ENCODE measurements at regions of chr17 and their contacts with region 1.

Region 1: GRCh38 chr17:83051395-83052233 is 27.8 kb upstream of the METRNL start:
- DNase-seq: peak; percentile 97
- ATAC-seq: peak; percentile 85
- H3K4me3 Mint-ChIP-seq: peak overlapping the region; percentile 79
- H3K27ac Mint-ChIP-seq: peak overlapping the region; percentile 78
- H3K4me1 Mint-ChIP-seq: peaks cover 31% of the 10 kb centered on the region
- H3K27me3 Mint-ChIP-seq: no peaks in the 10 kb centered on the region
- CTCF ChIP-seq: no peak

Region 2: GRCh38 chr17:82674656-82675475 is 376.7 kb before region 1 on chr17:
- CTCF ChIA-PET with region 1: no interaction called
- POLR2A ChIA-PET with region 1: no interaction called
- intact Hi-C with region 1: no loop called
- DNase-seq: no peak
- ATAC-seq: no peak
- H3K4me3 Mint-ChIP-seq: no peak overlapping the region
- H3K27ac Mint-ChIP-seq: no peak overlapping the region
- H3K4me1 Mint-ChIP-seq: no peaks in the 10 kb centered on the region
- H3K27me3 Mint-ChIP-seq: no peaks in the 10 kb centered on the region
- CTCF ChIP-seq: no peak

Region 3: GRCh38 chr17:82751571-82752370 is 299.8 kb before region 1 on chr17 and contains the start of gene TBCD:
- CTCF ChIA-PET with region 1: no interaction called
- POLR2A ChIA-PET with region 1: no interaction called
- intact Hi-C with region 1: loop called (anchors 2 kb)
- DNase-seq: peak; percentile 86
- ATAC-seq: peak; percentile 88
- H3K4me3 Mint-ChIP-seq: peak within 1 kb of the TSS; percentile 84
- H3K27ac Mint-ChIP-seq: no peak within 1 kb of the TSS
- H3K4me1 Mint-ChIP-seq: peaks cover 22% of the 10 kb centered on the region
- H3K27me3 Mint-ChIP-seq: no peaks in the 10 kb centered on the region
- CTCF ChIP-seq: no peak
- total RNA-seq, gene TBCD: 49.9 and 50.9 TPM in 2 replicates

Region 4: DNA sequence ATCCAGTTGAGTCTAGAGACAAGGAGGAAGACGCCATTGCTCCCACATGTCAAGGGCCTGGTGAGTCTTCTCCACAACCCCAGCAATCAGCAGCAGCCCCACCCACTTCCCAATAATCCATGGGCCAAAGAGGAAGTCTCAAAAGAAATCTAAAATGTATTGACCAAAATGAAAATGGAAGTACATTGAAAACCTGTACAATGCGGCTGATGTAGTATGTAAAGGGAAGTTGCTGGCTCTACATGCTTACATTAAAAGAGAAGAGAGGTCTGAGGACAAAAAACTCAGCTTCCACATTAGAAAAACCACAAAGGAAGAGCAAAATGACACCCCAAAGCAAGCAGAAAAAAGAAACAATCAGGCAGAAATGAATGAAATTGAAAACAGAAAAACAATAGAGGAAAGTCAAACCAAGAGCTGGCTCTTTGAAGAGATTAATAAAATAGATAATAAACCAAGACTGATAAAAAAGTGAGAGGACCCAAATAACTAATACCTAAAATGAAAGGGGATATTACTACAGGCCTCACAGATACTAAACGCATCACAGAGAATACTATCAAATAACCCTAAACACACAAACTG is 72.8 kb before region 1 on chr17:
- CTCF ChIA-PET with region 1: no interaction called
- POLR2A ChIA-PET with region 1: no interaction called
- intact Hi-C with region 1: loop called (anchors 5 kb)
- DNase-seq: no peak
- ATAC-seq: peak; percentile 56
- H3K4me3 Mint-ChIP-seq: peak overlapping the region; percentile 40
- H3K27ac Mint-ChIP-seq: peak overlapping the region; percentile 86
- H3K4me1 Mint-ChIP-seq: peaks cover 33% of the 10 kb centered on the region
- H3K27me3 Mint-ChIP-seq: no peaks in the 10 kb centered on the region
- CTCF ChIP-seq: no peak

Region 5: DNA sequence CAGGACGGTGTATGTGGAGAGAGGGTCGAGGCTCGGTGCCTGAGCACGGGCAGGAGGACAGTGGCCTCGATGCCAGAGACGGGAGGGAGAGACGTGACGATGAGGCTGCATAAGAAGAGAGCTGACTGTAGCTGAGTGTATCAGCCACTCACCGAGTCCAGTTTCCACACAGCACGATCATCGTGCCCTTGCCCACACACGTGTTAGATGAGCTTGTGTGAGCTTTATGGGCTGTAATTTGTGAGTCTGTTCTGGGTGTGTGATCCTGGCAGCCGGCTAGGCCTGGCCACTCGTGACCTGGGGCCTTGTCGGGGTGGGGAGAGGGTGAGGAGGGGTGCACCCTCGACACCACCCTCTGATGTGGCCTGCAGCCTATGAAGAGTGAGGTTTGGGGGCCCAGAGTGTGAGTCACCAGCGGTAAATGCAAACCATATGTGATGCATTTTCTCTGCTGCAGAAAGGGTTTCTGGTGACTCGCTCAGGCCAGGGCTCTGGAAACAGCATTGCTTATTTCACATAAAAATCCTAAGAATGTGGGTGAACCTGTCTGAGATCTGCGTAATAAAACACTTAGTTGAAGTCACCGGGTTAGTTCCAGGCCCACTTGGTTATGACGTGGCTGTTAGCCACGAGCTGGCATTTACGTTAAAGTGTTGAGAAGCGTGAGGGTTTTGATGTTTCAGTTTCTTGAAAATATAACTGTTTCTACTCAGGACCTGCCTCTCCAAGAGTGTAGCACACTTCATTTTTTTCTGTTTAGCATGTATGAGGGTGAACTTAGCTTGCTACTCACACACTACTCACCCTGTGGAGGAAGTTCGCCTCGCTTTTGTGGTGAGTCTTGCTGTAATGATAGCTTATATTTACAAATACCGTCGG is 31.9 kb after region 1 on chr17:
- CTCF ChIA-PET with region 1: no interaction called
- POLR2A ChIA-PET with region 1: interaction called, 6 read pairs
- intact Hi-C with region 1: loop called (anchors 1 kb)
- DNase-seq: no peak
- ATAC-seq: no peak
- H3K4me3 Mint-ChIP-seq: no peak overlapping the region
- H3K27ac Mint-ChIP-seq: peak overlapping the region; percentile 25
- H3K4me1 Mint-ChIP-seq: peaks cover 32% of the 10 kb centered on the region
- H3K27me3 Mint-ChIP-seq: no peaks in the 10 kb centered on the region
- CTCF ChIP-seq: no peak

Region 6: DNA sequence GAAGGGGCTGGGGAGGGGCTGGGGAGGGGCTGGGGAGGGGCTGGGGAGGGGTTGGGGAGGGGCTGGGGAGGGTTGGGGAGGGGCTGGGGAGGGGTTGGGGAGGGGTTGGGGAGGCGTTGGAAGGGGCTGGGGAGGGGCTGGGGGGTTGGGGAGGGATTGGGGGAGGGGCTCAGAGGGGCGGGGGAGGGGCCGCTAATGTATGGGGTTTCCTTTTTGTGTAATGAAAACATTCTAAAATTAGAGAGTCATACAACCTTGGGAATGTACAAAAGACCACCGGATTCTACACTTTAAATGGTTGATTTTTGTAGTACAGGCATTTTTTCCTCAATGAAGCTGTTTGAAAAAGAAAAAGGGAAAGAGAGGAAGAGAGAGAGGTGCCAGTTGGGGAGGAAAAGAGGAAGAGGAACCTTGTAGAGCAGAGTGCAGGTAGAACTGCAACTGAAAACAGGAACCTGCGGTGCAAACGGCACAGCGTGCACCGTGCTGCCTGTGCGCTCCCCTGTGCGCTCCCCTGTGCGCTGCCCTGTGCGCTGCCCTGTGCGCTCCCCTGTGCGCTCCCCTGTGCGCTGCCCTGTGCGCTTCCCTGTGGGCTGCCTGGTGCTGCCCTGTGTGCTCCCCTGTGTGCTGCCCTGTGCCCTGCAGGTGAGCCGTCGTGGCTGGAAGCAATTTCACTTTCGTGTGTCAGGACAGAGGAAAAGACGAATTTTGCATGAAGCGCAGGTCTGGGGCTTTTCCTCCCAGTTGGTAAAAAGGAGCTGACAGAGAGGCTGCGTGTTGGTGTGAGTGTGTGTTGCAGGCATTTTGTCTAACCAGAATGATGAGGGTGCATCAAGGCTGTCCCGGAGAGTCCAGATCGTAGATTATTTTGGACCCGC is 68.6 kb after region 1 on chr17:
- CTCF ChIA-PET with region 1: no interaction called
- POLR2A ChIA-PET with region 1: no interaction called
- intact Hi-C with region 1: loop called (anchors 1 kb)
- DNase-seq: peak; percentile 55
- ATAC-seq: peak; percentile 100
- H3K4me3 Mint-ChIP-seq: peak overlapping the region; percentile 52
- H3K27ac Mint-ChIP-seq: peak overlapping the region; percentile 59
- H3K4me1 Mint-ChIP-seq: peaks cover 35% of the 10 kb centered on the region
- H3K27me3 Mint-ChIP-seq: peaks cover 18% of the 10 kb centered on the region
- CTCF ChIP-seq: no peak

Region 7: DNA sequence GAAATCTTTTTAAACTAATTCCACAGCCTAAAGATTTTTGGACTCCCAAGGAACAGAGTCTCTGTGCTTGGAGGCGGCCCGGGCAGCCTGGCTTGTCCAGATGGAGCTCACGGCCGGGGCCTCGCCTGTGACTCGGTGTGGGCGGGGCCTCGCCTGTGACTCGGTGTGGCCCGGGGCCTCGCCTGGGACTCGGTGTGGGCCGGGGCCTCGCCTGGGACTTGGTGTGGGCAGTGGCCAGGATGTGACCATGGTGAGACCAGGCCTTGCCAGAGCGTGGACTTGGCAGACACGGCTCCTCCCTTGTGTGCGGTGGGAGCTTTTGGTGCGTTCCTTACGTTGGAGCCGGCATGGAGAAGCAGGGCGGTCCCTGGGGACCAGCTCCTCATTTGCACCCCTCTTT is 120.0 kb after region 1 on chr17:
- CTCF ChIA-PET with region 1: no interaction called
- POLR2A ChIA-PET with region 1: no interaction called
- intact Hi-C with region 1: no loop called
- DNase-seq: no peak
- ATAC-seq: no peak
- H3K4me3 Mint-ChIP-seq: no peak overlapping the region
- H3K27ac Mint-ChIP-seq: no peak overlapping the region
- H3K4me1 Mint-ChIP-seq: peaks cover 18% of the 10 kb centered on the region
- H3K27me3 Mint-ChIP-seq: peaks cover 27% of the 10 kb centered on the region
- CTCF ChIP-seq: no peak

Measured in activated B cell treated with CpG ODN at 0.5 μM for 24 hours (primary cell).